Posterior vena cava (tissue), 2 donors: ENCODE measurements at regions of chr2 and their contacts with region 1.

Region 1: DNA sequence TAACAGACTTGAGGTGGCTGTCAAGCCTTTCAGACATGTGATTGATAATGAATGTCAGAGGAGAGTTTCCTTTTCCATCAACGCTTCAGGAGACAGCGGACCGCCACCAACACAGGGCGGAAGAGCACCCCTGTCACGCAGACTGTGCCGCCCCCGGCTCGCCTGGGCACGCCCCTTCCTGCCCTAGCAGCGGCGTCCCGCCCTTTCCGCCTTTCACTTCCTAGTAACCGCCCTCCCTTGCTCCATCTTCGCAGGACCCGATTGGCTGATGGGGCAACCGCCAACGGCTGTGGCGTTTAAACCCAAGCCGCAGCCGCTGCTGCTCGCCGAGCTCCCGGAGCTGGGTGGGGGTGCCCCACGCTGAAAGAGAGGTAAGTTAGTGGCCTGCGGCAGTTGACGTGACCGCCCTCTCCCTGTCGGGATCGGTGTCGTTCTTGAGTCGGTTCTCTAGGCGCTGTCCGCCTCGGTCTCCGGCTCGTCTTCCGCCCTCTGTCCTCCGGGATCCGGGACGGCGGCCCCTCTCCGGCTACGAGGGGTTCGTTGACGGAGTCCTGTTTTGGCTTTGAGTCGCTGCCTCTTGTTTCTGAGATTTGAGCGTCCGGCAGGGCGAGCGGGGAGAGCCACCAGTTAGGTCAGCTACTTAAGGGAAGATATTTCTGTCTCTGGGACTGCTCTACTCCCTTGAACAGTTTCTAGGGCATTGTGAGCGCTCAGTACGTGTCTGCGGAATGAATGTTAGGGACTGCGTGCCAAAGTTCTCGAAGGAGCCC is at the start of gene SGO2:
- DNase-seq: peak; percentile 98
- total RNA-seq, gene SGO2: 2.3 to 2.7 TPM

Region 2: DNA sequence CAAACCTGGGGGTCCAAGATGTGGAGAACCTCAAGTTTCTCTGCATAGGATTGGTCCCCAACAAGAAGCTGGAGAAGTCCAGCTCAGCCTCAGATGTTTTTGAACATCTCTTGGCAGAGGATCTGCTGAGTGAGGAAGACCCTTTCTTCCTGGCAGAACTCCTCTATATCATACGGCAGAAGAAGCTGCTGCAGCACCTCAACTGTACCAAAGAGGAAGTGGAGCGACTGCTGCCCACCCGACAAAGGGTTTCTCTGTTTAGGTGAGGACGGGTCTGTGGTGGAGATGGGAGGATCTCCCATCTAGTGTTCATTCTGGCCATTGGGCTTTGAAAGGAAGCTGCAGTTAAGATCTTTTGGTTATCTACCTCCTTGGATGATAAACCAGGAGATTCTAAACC is 659.8 kb after region 1 on chr2:
- intact Hi-C with region 1: loop called in 1 of 2 experiments (anchors 5 kb)
- DNase-seq: no peak

Region 3: DNA sequence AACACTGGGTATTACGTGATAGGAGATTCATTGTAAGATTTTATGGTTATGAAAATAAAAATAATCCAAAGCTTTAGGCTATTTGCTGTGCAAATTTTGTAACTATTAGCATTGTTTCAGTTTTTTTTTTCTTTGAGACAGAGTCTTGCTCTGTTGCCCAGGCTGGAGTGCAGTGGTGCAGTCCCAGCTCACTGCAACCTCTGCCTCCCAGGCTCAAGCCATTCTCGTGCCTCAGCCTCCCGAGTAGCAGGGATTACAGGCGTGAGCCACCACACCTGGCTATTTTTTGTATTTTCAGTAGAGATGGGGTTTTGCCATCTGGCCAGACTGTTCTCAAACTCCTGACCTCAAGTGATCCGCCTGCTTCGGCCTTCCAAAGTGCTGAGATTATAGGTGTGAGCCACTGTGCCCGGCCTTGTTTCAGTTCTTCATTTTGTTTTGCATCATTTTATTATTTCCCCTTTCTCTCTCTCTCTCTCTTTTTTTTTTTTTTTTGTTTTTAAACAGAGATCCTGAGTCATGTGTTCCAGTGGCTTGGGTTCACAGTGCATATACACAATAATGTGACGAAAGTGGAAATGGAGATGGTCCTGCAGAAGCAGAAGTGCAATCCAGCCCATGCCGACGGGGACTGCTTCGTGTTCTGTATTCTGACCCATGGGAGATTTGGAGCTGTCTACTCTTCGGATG is 682.6 kb after region 1 on chr2:
- intact Hi-C with region 1: no loop called
- DNase-seq: no peak